ENCODE measurements at regions of chr3 and their contacts with region 1.

Region 1: DNA sequence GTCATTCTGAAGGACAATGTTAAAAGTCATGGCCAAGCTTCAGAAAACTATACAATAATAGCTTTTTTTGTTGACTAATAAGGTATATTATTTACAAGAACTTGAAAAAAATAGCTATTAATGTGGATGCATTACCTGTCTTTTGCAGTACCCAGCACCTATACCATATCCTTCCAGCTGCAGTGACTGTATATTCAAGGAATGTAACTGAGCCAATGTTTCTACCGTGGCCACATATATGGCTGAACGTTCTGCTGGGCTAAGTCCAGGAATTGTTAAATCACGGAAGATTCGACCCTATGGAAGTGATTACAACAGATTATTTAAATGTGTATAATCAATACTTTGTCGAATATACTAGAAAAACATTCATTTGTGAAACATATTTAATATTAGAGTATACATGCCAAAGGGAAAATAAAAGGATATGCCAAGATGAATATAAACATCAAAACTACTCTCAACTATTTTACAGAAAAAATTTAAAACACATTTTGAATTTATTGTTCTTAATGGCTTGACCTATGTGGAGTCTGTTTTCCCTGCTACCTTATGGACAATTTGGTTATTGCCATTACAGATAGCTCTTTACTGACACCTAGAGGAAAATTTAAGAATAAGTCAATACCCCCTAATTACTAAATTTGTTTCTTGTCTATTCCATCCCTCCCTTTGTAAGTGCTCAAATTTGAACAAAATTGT is 17.6 kb downstream of the ACAD11 start:
- DNase-seq: no peak
- H3K4me3 ChIP-seq: no peak overlapping the region
- H3K27ac ChIP-seq: no peak overlapping the region
- H3K4me1 ChIP-seq: peaks cover 0 to 12% (median 0%) of the 10 kb centered on the region in 6 donors
- H3K27me3 ChIP-seq: no peaks in the 10 kb centered on the region
- CTCF ChIP-seq: peak; percentile 39 to 78 (median 67)
- POLR2A ChIP-seq: no peak

Region 2: DNA sequence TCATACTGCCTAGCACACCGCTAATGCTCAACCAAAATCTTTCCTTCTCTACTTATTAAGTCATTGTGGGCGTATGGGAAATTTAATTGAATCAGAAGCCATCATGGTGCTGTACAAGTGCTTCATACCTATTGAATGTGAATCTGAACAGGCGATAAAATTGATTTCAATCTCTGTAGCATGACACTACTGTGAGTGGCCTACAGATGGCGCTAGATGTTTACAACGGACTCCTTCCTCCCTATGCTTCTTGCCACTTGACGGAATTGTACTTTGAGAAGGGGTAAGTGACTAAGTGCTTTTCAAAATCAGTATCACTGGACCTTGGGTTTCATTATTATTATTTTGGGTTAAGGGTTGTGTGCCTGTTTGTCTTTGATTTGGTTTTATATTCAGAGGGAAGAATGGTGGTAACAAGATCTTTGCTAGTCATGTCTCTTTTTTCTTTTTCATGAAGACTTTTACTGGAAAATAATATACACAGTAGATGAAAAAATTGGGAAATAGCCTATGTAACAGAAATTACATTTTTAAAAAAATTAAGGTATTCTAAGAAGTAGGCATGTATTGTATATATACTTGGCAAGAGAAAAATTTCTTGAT is 289.3 kb before region 1 on chr3:
- intact Hi-C with region 1: loop called (anchors 10 kb)
- DNase-seq: no peak
- H3K4me3 ChIP-seq: no peak overlapping the region
- H3K27ac ChIP-seq: no peak overlapping the region
- H3K4me1 ChIP-seq: peaks cover 0 to 6% (median 2%) of the 10 kb centered on the region in 6 donors
- H3K27me3 ChIP-seq: no peaks in the 10 kb centered on the region
- CTCF ChIP-seq: peak; percentile 51 to 88 (median 84)
- POLR2A ChIP-seq: no peak

Region 3: GRCh38 chr3:132535575-132536441 is 106.2 kb before region 1 on chr3:
- intact Hi-C with region 1: loop called (anchors 5 kb)
- DNase-seq: no peak
- H3K4me3 ChIP-seq: no peak overlapping the region
- H3K27ac ChIP-seq: no peak overlapping the region
- H3K4me1 ChIP-seq: no peaks in the 10 kb centered on the region
- H3K27me3 ChIP-seq: no peaks in the 10 kb centered on the region
- CTCF ChIP-seq: peak in 10 of 11 experiments; percentile 11 to 72 (median 62)
- POLR2A ChIP-seq: no peak

Measured in spleen (tissue), 13 donors.